ENCODE measurements at regions of chr10 and their contacts with region 1.

Region 1: DNA sequence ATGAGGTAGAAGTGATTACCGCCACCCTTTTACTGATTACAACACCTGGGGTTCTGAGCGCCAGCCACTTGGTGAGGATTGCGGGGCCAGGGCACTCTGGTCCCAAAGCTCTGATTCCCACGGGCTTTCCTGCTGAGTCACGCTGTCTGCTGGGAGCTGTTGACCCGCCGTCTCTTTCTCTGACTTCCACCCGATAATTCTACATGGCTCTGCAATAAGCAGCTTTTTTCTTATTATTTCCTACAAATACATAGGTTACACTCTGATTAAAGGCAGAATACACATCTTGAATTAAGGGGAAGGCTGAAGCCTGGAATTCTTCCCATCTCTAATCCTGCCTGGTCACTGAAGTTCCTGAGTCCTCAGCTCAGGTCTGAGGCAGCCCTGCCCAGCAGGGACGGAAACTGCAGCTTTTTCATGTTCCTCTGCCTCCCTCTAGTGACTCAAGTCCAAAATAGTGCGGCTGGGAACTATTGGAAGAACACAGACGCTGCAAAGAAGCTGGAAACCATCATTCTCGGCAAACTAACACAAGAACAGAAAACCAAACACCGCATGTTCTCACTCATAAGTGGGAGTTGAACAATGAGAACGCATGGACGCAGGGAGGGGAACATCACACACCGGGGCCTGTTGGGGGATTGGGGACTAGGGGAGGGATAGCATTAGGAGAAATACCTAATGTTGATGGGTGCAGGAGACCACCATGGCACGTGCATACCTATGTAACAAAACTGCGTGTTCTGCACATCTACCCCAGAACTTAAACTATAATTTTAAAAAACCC is 178.3 kb downstream of the PRKCQ start:
- DNase-seq: peak; percentile 88
- H3K4me3 ChIP-seq: peak overlapping the region; percentile 29
- H3K27ac ChIP-seq: no peak overlapping the region
- H3K4me1 ChIP-seq: peaks cover 40% of the 10 kb centered on the region
- CTCF ChIP-seq: peak; percentile 90

Region 2: DNA sequence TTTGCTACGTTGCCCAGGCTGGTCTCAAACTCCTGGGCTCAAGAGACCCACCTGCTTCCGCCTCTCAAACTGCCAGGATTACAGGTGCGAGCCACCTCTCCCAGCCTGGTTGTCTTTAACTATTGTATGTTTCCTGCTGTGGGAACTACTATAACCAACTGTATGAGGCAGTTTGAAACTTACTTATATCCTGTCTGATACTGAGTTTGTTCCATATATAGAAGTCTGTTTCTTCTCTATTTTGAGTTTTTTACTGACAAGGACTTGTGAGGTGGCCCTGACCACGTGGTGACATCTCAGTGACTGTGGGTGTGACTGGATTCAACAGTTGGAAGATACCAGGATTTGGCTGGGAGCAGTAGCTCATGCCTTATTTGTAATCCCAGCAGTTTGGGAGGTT is 497.5 kb before region 1 on chr10:
- CTCF ChIA-PET with region 1: no interaction called
- POLR2A ChIA-PET with region 1: no interaction called
- intact Hi-C with region 1: no loop called
- DNase-seq: peak; percentile 27
- H3K4me3 ChIP-seq: no peak overlapping the region
- H3K27ac ChIP-seq: no peak overlapping the region
- H3K4me1 ChIP-seq: peaks cover 8% of the 10 kb centered on the region
- CTCF ChIP-seq: no peak

Region 3: DNA sequence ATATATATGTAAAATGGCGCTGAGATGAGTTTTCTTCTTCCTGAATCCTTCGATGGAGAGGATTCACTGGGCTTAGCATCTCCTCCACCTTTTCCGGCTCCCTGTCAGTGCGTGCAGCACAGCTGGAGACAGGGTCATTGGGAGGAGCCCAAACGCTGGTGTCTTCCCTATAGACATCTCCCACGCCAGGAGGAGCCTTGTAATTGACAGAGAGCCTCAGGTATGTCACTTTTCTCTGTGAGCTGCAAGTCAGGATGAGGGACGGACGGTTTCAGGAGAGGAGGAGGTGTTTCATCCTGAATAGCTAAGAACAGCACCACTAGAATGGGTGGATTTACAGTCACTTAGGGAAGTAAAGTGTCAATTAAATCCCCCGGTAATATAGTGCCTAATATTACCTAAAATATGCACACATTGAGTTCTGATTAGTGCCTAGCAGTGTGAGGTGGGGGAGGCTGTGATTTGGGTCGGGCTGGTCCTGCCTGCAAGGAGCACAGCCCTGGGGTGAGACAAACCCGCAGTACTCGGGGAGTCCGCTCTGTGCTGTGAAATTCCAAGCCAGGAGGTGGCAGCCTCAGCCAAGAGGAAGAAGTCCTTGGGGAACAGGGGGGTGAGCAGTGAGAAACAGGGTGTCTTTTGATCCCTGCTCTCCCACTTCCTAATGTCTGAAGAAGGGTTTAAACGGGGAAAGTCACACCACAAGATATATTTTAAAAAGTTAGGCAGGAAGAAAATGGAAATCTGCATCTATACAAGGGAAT is 452.6 kb before region 1 on chr10:
- CTCF ChIA-PET with region 1: no interaction called
- POLR2A ChIA-PET with region 1: no interaction called
- intact Hi-C with region 1: loop called (anchors 10 kb)
- DNase-seq: peak; percentile 61
- H3K4me3 ChIP-seq: no peak overlapping the region
- H3K27ac ChIP-seq: no peak overlapping the region
- H3K4me1 ChIP-seq: no peaks in the 10 kb centered on the region
- CTCF ChIP-seq: peak; percentile 79

Region 4: DNA sequence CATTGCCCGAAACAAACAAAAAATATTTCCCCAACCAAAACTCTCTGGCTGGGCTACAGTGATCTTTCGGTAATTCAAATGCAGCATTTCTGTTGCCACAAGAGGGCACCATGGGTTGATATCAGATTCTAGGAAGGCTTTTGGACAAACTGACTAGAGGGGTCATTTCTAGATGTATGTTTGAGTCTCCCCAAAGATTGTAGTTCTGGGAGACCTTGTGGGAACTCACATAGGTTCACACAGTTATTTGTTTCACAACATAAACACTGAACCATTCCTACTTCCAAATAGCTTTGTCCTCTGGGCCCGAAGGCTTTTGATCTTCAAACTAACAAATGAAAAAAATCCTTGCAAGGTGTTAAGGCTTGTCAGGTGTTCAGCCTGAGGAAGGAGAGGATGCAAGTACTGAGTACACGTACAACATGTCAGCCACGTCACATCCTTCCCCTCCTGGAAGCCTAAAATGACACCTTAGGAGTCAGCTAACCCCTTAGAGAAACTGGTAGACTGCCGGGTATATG is 387.5 kb before region 1 on chr10:
- CTCF ChIA-PET with region 1: no interaction called
- POLR2A ChIA-PET with region 1: no interaction called
- intact Hi-C with region 1: loop called (anchors 10 kb)
- DNase-seq: peak; percentile 86
- H3K4me3 ChIP-seq: peak overlapping the region; percentile 4
- H3K27ac ChIP-seq: peak overlapping the region; percentile 68
- H3K4me1 ChIP-seq: peaks cover 19% of the 10 kb centered on the region
- CTCF ChIP-seq: peak; percentile 99

Region 5: DNA sequence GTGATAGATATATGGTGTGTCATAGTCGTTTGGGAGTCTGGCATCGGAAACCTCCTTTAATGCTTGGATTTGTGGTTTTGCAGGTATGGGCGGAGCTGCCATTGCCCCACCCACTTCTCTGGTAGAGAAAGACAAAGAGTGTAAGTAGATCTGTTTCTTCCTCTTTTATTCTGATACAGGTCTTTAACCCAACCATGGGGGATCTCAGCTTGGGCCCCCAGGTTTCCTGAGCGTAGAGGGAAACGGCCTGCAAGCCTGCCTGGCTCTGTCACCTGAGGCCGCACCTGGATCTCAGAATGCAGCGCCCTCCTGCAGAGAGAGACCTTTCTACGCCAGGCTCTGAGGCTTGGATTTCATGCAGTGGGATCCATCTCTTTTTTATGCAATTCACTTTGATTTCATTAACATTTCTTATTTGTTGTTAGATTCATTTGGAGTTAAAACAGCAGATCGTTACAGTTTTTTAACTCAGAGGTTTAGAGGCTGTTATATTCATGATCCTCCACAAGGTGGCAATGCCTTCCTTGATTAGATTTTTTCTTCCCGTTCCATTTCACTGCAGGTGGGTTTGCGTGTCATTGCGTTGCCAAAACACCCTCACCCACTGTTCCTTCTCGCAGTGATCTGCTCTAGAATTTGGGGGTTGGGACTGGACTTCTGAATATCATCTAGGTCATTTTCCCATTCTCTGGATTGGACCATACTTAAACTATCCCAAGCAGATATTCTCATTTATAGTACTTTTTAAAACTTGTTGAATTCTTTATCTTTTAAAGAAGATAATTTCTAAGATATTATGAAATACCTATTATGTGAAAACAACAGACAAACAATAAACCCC is 292.9 kb before region 1 on chr10:
- CTCF ChIA-PET with region 1: no interaction called
- POLR2A ChIA-PET with region 1: interaction called, 6 read pairs
- intact Hi-C with region 1: loop called (anchors 1 kb)
- DNase-seq: peak; percentile 68
- H3K4me3 ChIP-seq: no peak overlapping the region
- H3K27ac ChIP-seq: no peak overlapping the region
- H3K4me1 ChIP-seq: no peaks in the 10 kb centered on the region
- CTCF ChIP-seq: peak; percentile 91

Region 6: GRCh38 chr10:6300106-6300783 is 101.5 kb before region 1 on chr10:
- CTCF ChIA-PET with region 1: no interaction called
- POLR2A ChIA-PET with region 1: interaction called, 7 read pairs
- intact Hi-C with region 1: loop called (anchors 5 kb)
- DNase-seq: peak; percentile 89
- H3K4me3 ChIP-seq: peak overlapping the region; percentile 54
- H3K27ac ChIP-seq: peak overlapping the region; percentile 93
- H3K4me1 ChIP-seq: peaks cover 87% of the 10 kb centered on the region
- CTCF ChIP-seq: no peak

Region 7: DNA sequence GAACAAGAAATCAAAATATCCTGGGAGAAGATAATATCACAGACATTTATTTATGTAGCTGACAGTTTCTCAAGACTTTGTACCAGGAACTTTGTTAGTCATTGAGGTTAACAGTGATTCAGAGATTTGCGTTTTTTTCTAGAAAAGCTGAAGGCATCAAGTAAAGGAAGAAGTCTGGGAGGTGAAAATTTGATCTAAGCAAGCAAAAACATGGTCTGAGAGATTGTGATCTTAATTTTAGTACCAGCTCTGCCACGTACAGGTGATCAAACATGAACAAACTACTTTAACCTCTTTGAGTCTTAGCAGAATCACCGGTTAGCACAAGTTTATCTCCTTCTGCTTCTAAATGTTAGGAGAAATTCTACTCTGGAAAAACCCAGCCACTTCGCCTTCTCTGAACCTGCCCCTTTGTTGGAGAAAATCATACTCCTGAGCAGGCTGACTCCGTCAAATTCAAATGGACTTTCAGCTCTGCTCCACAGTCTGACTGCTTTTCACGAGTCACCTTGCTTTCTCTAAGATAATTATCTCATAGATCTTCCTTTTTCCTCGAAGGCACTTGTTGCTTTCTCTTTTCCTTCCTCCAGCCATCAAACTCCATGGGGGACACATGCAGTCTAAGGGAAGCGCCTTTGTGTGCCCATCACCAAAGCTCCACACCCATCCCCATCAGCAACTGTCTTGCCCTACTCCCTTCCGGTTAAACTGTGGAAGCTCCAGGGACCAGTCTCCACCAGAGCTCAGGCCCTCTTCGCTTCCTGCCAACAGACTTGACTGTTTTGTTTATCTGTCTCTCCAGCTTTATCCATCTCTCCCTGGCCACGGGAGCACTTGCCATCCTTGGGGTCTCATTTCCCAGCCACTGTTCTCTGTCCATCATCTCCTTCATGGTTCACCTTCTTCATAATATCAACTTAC is 92.0 kb after region 1 on chr10:
- CTCF ChIA-PET with region 1: no interaction called
- POLR2A ChIA-PET with region 1: no interaction called
- intact Hi-C with region 1: no loop called
- DNase-seq: no peak
- H3K4me3 ChIP-seq: no peak overlapping the region
- H3K27ac ChIP-seq: no peak overlapping the region
- H3K4me1 ChIP-seq: peaks cover 3% of the 10 kb centered on the region
- CTCF ChIP-seq: no peak

Measured in OCI-LY7 (cell line).